ENCODE measurements at regions of chr6 and their contacts with region 1.

Region 1: DNA sequence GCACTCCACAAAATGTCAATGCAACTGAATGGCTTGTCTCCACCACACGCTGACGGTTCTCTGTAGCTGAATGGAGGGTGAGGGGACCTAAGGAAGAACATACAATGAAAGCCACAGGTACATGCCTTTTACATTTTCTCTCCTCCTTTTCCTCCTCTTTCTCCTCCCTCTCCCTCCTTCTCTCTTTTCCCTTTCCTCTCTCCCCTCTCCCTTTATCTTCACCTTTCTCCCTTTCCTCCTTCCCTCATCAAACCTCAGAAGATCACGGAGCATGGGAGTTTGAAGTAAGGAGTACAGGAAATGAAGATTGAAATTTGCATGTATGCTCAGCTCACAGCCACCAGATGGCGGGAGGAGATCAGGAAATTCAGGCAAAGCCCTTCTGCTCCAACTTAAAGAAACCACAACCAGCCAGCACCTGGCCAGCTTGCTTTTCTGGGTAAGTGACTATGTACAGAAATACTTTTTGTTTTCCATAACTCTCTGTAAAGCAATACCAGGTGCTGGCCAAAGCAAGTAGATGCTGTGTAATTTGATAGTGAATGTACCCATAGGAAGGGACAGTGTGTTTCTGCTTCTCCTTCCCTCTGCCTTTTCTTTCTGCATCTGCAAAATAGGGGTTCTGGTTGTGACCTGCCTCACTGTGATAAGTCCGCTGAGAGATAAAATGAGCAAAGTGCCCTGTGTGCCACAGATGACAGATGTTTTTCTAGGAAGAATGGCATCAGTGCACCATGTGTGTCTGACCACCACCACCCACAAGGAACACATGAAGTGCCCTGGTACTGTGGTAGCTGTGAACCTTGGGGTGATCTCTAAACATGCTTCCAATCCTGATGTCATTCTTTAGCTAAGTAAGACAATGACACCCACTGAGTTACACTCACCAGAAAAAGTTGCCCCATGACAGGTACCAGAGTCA is 18.6 kb upstream of the FOXO3 start:
- DNase-seq: peak in 5 of 6 donors; percentile 54 to 82 (median 59)
- ATAC-seq: peak; percentile 95 to 98 (median 97)
- H3K4me3 ChIP-seq: peak overlapping the region in 1 of 4 donors; percentile 9
- H3K27ac ChIP-seq: no peak overlapping the region
- H3K4me1 ChIP-seq: peaks cover 0 to 7% (median 0%) of the 10 kb centered on the region in 3 donors
- H3K27me3 ChIP-seq: no peaks in the 10 kb centered on the region
- CTCF ChIP-seq: peak; percentile 52 to 63 (median 61)

Region 2: DNA sequence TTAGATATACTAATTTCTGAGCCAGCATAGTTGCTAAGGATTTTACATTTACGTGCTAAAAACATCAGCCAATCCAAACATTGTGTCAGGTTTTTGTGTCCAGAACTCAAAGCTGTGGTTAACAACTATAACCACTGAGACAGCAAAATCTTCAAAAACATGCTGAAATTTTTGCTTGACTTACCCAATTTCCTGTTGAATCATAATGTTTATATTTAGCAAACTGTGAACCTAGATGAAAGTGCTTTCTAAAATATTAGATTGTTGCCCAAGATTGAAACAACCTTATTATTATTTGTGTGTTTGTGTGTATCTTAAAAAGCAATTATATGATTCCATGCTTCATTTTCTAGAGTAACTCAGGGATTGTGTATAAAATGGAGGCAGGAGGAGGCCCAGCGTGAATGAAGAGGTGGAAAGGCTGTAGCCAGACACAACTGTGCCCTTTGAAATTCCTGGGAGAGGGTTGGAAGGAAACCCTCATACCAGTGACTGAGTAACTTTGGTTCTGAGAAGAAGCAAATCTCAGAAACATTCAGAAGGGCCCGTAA is 354.1 kb after region 1 on chr6:
- intact Hi-C with region 1: loop called in 2 of 3 experiments (anchors 5 kb)
- DNase-seq: no peak
- ATAC-seq: peak in 3 of 4 donors; percentile 23 to 62 (median 54)
- H3K4me3 ChIP-seq: no peak overlapping the region
- H3K27ac ChIP-seq: peak overlapping the region in 2 of 4 donors; percentile 33 to 64
- H3K4me1 ChIP-seq: peaks cover 0 to 15% (median 0%) of the 10 kb centered on the region in 3 donors
- H3K27me3 ChIP-seq: no peaks in the 10 kb centered on the region
- CTCF ChIP-seq: no peak

Region 3: GRCh38 chr6:109073344-109074132 is 531.4 kb after region 1 on chr6:
- intact Hi-C with region 1: loop called (anchors 10 kb)
- DNase-seq: peak in 2 of 6 donors; percentile 39 to 42
- ATAC-seq: peak in 3 of 4 donors; percentile 80 to 87 (median 83)
- H3K4me3 ChIP-seq: no peak overlapping the region
- H3K27ac ChIP-seq: no peak overlapping the region
- H3K4me1 ChIP-seq: peaks cover 0 to 11% (median 0%) of the 10 kb centered on the region in 3 donors
- H3K27me3 ChIP-seq: no peaks in the 10 kb centered on the region
- CTCF ChIP-seq: peak in 3 of 4 donors; percentile 31 to 43 (median 39)

Measured in pancreas (tissue), 10 donors.